Cardiac septum (tissue), 1 donor: ENCODE measurements at regions of chr14 and their contacts with region 1.

Region 1: DNA sequence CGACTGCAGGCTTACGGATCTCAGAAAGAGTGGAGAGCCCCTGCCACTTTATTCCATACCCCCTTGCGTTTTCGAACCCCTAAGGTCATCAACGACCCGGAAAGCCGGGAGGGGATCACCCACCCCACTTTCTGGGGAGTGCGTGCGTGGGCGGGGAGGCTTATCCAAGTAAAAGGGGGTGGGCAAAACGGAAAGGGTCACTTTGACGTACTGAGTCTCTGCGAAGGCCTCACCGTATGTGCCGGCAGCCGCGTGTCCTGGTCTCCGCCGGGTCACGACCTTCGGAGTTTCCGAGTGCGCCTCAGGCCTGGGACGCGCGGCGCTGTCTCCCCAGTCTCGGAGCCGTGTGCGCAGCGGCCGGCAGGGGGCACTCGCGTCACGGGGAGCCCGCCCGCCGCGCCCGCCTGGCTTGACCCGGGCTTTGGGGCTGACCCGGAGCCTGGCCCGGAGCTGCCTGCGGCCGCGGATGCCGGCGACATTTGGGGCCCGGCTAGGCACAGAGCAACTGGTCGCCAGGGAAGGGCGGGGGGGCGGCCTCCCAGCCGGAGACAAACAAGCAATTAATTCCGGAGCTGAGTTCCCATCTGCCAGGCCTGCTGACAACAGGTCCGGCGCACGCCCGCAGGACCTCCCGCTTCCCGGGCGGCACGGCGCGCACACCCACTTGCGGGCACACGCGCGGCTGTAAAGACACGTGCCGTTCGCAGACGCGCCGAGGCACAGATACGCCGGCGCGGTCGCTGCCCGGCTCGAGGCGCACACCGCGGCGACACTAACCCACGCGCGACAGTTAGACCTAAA is 890 bp upstream of the KIF26A start:
- DNase-seq: no peak

Region 2: GRCh38 chr14:103104654-103105452 is 1032.6 kb before region 1 on chr14:
- intact Hi-C with region 1: no loop called
- DNase-seq: peak; percentile 93

Region 3: DNA sequence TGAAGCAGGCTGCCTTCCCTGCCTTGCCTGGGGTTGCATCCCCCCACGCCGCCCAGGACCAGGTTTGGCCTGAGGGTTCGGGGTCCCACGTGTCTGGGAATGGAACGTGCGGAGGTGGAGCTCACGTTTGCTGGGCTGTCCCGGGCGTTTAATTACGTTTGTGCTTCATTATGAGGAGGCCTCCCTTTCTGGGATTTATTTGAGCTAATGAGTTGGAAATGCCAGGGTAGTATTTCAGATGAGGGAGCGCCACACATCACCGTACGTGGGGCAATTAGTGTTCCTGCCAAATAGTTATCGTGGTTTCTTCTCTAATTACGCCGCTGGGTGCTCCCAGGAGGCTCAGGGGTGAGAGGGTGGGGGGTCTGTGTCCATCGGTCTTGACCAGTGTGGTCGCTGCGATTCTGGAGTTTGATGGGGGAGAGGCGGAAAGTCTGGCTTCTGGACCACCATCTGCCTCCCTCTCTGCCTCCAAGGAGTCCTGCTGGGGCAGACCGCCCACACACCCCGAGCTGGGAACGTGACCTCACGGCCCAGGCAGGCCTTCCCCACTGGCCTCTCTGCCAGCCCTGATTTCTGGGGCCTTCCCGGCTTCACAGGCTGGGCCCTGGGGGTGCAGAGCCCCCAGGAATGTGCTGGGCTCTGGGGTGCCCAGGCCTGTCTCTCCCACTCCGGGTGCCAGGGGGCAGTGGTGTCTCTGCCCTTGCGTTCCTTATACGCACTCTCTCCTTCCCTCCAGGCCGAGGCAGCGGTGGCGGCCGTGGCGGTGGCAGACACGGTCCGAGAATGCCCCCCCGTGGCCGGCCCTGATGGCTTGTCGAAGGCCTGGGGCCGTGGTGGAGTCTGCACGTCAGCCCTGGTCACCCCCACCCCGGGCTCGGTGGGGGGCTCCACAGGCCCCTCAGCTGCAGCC is 19.8 kb after region 1 on chr14:
- intact Hi-C with region 1: no loop called
- DNase-seq: no peak

Region 4: GRCh38 chr14:104171029-104171697 is 33.7 kb after region 1 on chr14:
- intact Hi-C with region 1: no loop called
- DNase-seq: no peak

Region 5: GRCh38 chr14:104184911-104185499 is 47.5 kb after region 1 on chr14:
- intact Hi-C with region 1: loop called (anchors 2 kb)
- DNase-seq: no peak

Region 6: GRCh38 chr14:104224506-104225277 is 87.2 kb after region 1 on chr14:
- intact Hi-C with region 1: loop called (anchors 5 kb)
- DNase-seq: no peak

Region 7: GRCh38 chr14:104293851-104294627 is 156.5 kb after region 1 on chr14:
- intact Hi-C with region 1: no loop called
- DNase-seq: peak; percentile 66

Region 8: GRCh38 chr14:104341532-104342434 is 204.3 kb after region 1 on chr14:
- intact Hi-C with region 1: loop called (anchors 10 kb)
- DNase-seq: peak; percentile 74

Region 9: GRCh38 chr14:104393898-104394381 is 256.4 kb after region 1 on chr14:
- intact Hi-C with region 1: loop called (anchors 10 kb)
- DNase-seq: peak; percentile 86

Region 10: GRCh38 chr14:104563742-104564615 is 426.5 kb after region 1 on chr14:
- intact Hi-C with region 1: loop called (anchors 1 kb)
- DNase-seq: peak; percentile 82

Region 11: GRCh38 chr14:104639889-104640548 is 502.5 kb after region 1 on chr14:
- intact Hi-C with region 1: loop called (anchors 5 kb)
- DNase-seq: no peak